Cardiac septum (tissue), 1 donor: ENCODE measurements at regions of chr20 and their contacts with region 1.

Region 1: DNA sequence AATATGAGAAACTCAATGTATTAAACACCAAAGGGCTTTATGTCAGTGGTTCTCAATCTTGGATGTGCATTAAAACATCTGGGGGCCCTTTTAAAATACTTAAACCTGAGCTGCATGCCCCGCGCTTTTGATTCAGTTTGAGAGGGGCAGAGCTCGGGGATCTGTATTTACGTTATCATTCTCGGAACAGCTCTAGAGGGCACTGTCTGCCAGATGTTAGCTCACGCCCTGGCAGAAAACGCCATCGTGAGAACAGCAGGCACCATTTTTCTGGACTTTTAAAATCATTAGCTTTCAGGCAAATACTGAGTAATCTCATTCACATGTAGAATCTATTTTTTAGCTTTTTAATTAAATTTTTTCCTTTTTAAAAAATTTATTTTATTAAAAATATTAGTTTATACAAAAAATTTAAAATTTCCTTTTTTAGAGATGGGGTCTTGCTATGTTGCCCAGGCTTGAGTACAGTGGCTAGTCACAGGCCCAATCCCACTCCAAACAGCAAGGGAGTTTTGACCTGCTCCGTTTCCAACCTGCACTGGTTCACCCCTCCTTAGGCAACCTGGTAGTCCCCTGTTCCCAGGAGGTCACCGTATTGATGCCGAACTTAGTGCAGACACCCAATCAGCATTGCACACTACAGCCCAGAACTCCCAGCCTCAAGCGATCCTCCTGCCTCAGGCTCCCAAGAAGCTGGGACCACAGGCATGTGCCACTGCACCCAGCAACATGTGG is 30.0 kb upstream of the ZNF133 start:
- DNase-seq: no peak

Region 2: DNA sequence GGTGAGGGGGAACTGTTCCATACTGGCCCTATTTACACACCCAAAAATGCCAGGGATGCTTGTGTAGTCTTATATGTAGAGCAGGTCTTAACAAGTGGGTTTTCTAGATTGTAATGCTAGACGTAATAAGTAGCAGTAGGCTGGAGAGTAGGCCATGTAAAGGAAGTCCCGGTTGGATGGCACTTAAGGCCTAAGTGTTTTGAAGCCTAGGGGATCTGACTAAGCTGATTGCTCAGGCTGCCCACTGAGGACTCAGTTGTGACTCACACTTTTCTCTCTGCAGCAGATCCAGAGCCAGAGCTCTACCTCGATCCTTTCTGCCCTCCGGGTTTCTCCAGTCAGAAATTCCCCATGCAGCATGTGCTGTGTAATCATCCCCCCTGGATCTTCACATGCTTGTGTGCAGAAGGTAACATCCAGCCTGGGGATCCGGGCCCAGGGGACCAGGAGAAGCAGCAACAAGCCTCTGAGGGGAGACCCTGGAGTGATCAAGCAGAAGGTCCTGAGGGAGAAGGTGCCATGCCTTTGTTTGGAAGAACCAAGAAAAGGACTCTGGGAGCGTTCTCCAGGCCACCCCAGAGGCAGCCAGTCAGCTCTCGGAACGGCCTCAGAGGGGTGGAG is 56.6 kb after region 1 on chr20:
- intact Hi-C with region 1: loop called (anchors 10 kb)
- DNase-seq: no peak

Region 3: GRCh38 chr20:18571578-18571977 is 313.3 kb after region 1 on chr20:
- intact Hi-C with region 1: no loop called
- DNase-seq: no peak

Region 4: GRCh38 chr20:18587665-18588573 is 329.6 kb after region 1 on chr20 and contains the start of gene DTD1:
- intact Hi-C with region 1: no loop called
- DNase-seq: peak; percentile 97
- total RNA-seq, gene DTD1: 14.3 TPM